Heart right ventricle (tissue), 16 donors: ENCODE measurements at regions of chr2 and their contacts with region 1.

Region 1: GRCh38 chr2:19863303-19864041 is 38.3 kb downstream of the TTC32 start:
- DNase-seq: peak; percentile 58 to 76
- ATAC-seq: peak; percentile 75 to 89 (median 88)
- H3K4me3 ChIP-seq: peak overlapping the region in 6 of 10 donors; percentile 10 to 40 (median 26)
- H3K27ac ChIP-seq: peak overlapping the region in 3 of 10 donors; percentile 7 to 59 (median 10)
- H3K4me1 ChIP-seq: peaks cover 0 to 13% (median 8%) of the 10 kb centered on the region in 9 donors
- H3K27me3 ChIP-seq: peaks cover 0 to 4% (median 0%) of the 10 kb centered on the region in 7 donors
- CTCF ChIP-seq: peak; percentile 93 to 100 (median 95)

Region 2: DNA sequence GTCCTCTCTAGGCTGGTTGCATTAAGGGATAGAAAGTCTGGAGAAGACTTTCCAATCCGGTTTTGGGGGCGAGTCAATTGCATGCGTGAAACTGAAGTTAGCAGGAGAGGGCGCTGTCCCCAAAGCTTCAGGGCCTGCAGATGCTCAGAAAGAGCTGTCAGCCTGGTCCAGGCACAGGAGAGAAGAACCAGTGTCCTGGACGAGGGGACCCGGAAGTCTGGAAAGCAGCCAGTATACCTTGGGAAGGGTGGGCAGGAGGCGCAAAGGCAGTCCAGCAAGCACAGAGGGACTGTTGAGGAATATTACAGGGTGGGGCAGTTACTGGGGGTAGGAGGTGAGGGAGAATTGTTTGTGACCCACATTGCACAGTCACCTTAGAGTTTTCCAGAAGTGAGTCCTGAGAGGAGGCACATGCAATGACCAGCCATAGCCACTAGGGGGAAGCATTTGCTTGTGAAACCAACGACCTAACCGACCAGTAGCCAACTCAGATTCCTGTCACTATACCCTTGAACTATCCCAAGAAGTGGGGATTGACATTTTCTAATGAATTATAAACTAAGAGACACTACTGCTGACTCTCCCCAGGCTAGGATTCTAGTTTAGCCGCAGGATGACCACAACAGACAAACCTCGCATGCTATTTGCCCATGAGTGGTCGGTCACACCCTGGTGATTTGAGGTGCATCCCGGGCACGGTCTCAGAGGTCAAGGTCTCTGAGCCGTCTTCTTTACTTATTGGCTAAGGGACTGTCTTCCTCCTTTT is 1475.8 kb before region 1 on chr2:
- intact Hi-C with region 1: loop called in 7 of 10 experiments (anchors 5 to 10 kb)
- DNase-seq: peak; percentile 51 to 70
- ATAC-seq: peak; percentile 83 to 94 (median 92)
- H3K4me3 ChIP-seq: no peak overlapping the region
- H3K27ac ChIP-seq: peak overlapping the region in 5 of 10 donors; percentile 3 to 56 (median 29)
- H3K4me1 ChIP-seq: peaks cover 0 to 7% (median 0%) of the 10 kb centered on the region in 9 donors
- H3K27me3 ChIP-seq: peaks cover 0 to 3% (median 0%) of the 10 kb centered on the region in 7 donors
- CTCF ChIP-seq: peak; percentile 81 to 96 (median 92)

Region 3: DNA sequence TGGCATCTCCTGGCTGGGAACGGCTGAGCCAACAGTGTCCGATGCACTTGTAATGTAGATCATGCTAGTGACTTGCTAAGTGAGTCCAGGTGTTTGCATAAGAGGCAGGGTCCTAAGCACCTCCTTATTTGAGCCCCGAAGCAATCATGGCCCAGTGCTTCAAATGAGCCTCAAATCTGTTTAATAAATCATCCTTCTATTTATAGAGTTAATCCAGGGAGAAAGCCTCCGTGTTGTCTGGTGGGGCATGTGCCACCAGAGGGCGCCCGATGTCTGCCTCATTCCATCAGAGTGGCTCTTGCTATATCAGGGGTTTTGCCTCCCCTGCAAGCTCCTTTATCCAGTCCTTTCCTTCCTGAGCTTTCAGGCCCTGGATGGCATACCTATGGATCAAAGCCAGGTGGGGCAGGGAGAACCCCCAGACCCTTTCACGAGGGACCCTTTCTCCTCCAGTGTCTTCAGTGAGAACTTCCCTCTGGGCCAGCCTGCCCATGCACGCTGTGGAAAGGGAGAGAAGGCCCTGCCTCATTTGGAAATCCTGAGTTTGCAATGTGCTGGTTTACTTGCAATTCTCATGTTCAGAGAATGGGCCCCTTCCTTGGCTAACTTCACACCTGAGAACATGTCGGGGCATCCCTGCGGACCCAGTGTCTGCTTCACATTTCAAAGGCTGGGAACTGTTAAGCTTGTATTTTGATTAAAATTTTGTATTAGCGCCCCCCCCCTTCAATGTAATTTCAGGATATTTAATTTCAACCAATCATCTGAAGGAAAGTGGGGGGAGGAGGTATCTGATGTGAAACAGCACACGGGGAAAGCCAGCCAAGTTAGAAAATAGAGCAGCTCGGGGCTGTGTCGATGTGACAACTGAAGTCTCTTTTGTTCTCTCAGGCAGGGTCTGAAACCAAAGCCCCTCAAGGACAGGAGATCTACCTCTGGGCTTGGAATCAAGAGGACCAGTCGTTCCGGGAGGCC is 1342.7 kb before region 1 on chr2:
- intact Hi-C with region 1: loop called in 9 of 10 experiments (anchors 1 to 5 kb)
- DNase-seq: peak; percentile 86 to 88
- ATAC-seq: peak; percentile 84 to 92 (median 86)
- H3K4me3 ChIP-seq: peak overlapping the region in 6 of 10 donors; percentile 0 to 37 (median 8)
- H3K27ac ChIP-seq: peak overlapping the region in 9 of 10 donors; percentile 37 to 79 (median 64)
- H3K4me1 ChIP-seq: peaks cover 8 to 47% (median 26%) of the 10 kb centered on the region in 9 donors
- H3K27me3 ChIP-seq: no peaks in the 10 kb centered on the region
- CTCF ChIP-seq: peak; percentile 82 to 94 (median 90)

Region 4: DNA sequence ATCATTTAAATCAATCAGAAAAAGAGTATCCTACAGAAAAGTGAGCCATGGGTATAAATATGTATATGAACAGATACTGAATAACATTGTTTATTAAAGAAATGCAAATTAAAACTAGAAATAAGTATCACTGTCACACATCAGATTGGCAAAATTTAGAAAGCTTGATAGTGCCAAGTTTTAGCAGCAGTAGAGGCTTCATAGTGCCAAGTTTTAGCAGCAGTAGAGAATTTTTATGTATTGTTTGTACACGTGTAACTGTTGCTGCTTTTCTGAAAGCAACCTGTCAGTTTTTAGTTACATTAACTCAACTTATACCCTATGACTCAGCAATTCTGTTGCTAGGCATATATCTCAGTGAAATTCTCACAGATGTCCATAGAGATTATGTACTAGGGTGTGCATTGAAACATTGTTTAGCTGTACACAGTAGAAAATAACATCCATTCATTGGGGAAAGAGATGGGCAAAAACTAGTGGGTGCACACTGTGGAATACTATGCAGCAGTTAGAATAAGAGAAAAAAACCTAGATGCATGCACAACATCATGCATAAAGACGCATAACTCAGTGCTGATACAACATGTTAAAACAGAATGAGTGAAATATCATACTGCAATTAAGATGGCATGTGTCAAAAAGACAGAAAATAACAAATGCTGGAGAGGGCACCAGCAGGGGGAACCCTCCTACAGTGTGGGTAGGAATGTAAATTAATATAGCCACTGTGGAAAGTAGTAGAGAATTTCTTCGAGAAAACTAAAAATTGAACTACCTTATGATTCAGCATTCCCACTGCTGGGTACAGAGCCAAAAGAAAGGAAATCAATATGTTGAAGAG is 979.6 kb before region 1 on chr2:
- intact Hi-C with region 1: loop called in 1 of 10 experiments (anchors 10 kb)
- DNase-seq: no peak
- ATAC-seq: no peak
- H3K4me3 ChIP-seq: no peak overlapping the region
- H3K27ac ChIP-seq: no peak overlapping the region
- H3K4me1 ChIP-seq: peaks cover 0 to 6% (median 0%) of the 10 kb centered on the region in 9 donors
- H3K27me3 ChIP-seq: no peaks in the 10 kb centered on the region
- CTCF ChIP-seq: peak in 7 of 9 donors; percentile 8 to 42 (median 32)

Region 5: DNA sequence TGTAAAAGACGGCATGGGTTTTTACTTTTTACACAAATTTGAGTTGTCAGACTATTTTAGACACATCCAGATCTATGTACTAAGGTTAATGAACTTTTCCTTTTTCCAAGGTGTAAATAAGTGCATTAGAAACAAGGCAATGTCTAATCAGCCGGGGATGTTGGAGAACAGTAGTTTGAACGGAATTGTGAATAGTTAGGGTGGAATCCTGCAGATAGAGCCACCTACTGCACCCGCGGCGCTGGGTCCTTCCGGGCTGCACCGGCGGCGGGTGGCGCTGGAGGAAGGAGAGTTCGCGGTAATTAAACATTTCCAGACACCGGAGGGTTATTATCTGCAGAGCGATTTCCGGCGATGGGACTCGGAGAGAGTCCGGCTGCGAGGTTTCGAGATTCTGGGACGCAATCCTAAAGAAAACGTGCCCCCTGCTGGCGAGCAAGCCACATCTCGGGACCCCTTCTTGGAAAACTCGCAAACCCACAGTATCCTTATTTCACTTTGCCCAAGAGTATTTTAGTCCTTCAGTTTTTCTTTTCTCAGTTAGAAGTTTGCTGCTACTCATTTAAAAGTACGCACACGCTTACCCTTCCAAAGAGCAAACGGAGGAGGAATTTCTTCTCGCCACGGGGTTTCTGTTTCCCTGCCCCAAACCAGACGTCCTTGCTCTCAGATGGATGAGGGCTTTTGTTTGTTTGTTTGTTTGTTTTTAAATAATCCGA is 500.6 kb before region 1 on chr2:
- intact Hi-C with region 1: loop called in 7 of 10 experiments (anchors 5 to 10 kb)
- DNase-seq: peak; percentile 73 to 83
- ATAC-seq: peak; percentile 28 to 78 (median 57)
- H3K4me3 ChIP-seq: peak overlapping the region; percentile 52 to 77 (median 65)
- H3K27ac ChIP-seq: peak overlapping the region in 7 of 10 donors; percentile 11 to 65 (median 46)
- H3K4me1 ChIP-seq: peaks cover 0 to 34% (median 26%) of the 10 kb centered on the region in 9 donors
- H3K27me3 ChIP-seq: peaks cover 0 to 75% (median 19%) of the 10 kb centered on the region in 7 donors
- CTCF ChIP-seq: peak; percentile 65 to 90 (median 79)

Region 6: GRCh38 chr2:19673213-19673791 is 190.2 kb before region 1 on chr2:
- intact Hi-C with region 1: loop called in 1 of 10 experiments (anchors 10 kb)
- DNase-seq: peak in 1 of 2 donors; percentile 10
- ATAC-seq: peak in 5 of 8 donors; percentile 13 to 56 (median 34)
- H3K4me3 ChIP-seq: no peak overlapping the region
- H3K27ac ChIP-seq: peak overlapping the region in 2 of 10 donors; percentile 22 to 39
- H3K4me1 ChIP-seq: peaks cover 0 to 14% (median 7%) of the 10 kb centered on the region in 9 donors
- H3K27me3 ChIP-seq: no peaks in the 10 kb centered on the region
- CTCF ChIP-seq: no peak